ENCODE measurements at regions of chr11 and their contacts with region 1.

Region 1: DNA sequence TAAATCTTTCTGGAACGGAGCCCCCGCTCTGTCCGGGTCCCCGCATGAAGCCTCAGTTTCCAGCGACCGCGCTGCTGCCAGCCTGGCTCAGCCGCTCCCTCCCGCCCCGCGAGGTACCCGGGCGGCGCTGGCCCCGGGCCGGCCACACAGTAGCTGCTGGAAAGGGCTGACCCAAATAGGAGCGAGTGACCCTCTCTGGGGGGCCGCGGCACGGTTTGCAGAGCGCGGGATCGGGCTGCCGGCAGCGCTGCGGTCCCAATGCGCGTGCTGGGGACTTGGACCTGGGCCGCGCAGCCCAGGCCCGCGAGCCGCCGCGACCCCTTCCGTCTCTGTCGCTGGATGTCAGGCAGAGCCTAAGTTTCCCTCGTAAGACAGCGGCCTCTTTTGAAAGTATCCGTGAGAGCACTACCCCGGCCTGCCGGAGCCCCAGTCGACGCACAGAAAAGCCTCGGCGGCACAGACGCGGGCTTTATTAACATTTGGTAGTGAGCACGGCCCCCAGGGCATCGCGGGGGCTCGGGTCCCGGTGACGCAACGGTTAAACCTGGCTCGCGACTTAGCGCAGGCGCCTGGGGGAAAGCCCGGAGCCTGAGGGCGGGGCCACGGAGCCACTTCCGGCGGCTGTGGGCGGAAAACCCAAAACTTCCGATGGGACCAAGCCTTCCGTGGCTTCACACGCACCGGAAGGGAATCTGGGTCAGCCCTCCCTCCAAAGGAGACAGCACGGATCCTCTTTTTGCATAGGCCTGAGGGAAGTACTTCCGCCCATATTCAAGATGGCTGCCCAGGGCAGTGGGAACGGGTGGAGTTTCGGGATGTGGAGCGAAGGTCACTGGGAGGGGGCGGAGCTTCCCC is 14.9 kb downstream of the BAD start:
- DNase-seq: peak; percentile 94 to 99 (median 96)
- ATAC-seq: peak; percentile 68
- H3K4me3 ChIP-seq: peak overlapping the region; percentile 97
- H3K4me3 Mint-ChIP-seq: peak overlapping the region; percentile 94
- H3K27ac ChIP-seq: peak overlapping the region; percentile 92 to 99
- H3K27ac Mint-ChIP-seq: peak overlapping the region; percentile 99
- H3K4me1 ChIP-seq: peaks cover 43% of the 10 kb centered on the region
- H3K4me1 Mint-ChIP-seq: peaks cover 32% of the 10 kb centered on the region
- H3K27me3 ChIP-seq: no peaks in the 10 kb centered on the region
- H3K27me3 Mint-ChIP-seq: peaks cover 5% of the 10 kb centered on the region
- CTCF ChIP-seq: no peak

Region 2: DNA sequence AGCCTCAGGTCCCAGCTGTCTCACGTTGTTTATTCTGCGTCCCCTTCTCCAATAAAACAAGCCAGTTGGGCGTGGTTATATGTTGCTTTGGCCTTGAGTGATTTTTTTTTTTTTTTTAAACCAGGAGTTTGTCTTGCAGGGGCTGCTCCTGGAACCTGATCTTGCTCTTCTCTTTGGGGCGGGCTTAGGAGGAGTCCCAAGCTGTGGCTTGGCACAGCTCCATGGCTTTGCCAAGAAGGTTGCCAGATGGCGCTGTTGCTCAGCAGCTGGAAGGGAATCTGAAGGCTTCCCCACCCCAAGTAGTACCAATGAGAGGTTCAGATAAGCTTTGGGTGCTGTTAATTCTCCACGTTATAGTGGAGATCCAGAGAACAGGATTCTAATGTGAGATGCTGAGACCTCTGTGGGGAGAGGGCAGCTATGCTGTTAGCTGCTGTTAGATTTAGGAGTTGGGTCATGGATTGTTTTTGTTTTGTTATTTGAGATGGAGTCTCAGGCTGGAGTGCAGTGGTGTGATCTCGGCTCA is 65.1 kb before region 1 on chr11:
- CTCF ChIA-PET with region 1: interaction called, 19 read pairs
- POLR2A ChIA-PET with region 1: interaction called, 108 read pairs
- intact Hi-C with region 1: loop called (anchors 1 to 2 kb)
- DNase-seq: peak; percentile 77 to 95 (median 84)
- ATAC-seq: peak; percentile 63
- H3K4me3 ChIP-seq: no peak overlapping the region
- H3K4me3 Mint-ChIP-seq: peak overlapping the region; percentile 93
- H3K27ac ChIP-seq: no peak overlapping the region
- H3K27ac Mint-ChIP-seq: peak overlapping the region; percentile 78
- H3K4me1 ChIP-seq: peaks cover 50% of the 10 kb centered on the region
- H3K4me1 Mint-ChIP-seq: peaks cover 49% of the 10 kb centered on the region
- H3K27me3 ChIP-seq: no peaks in the 10 kb centered on the region
- H3K27me3 Mint-ChIP-seq: no peaks in the 10 kb centered on the region
- CTCF ChIP-seq: peak; percentile 69

Region 3: DNA sequence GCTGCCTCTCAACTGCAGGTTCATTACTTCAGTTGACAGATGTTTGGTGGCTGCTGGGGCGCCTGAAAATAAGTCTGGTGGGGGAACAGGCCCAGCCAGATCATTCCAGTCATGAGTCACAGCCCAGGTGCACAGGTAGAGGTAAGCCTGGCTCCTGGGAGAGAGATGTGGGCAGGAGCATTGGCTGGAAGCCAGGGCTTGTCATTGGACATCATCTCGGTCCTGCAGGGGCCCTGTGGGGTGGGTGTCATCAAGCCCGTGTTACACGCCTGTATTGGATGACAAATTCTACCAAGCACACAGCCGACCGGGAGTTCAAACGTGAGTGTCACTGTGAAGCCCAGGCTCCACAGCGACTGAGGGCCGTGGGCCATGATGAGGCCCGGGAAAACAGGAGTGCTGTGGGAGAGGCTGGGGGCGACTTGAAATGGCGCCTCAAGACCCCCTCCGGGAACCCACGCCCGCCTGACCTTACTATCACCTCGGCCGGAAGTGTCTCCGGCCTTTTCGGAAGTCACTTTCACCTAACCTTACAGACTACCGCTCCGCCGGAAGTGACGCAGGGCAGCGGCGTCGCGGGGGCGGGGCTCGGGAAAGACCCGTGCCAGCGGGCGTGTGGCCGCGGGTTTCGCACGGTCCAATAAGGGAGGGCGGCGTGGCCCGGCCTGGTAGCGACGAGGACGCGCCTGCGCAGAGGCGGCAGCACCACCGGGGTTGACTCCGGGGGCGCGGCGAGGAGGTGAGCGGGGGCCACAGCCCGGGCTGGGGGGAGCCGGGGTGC is 29.0 kb before region 1 on chr11 and contains the start of gene FKBP2:
- CTCF ChIA-PET with region 1: no interaction called
- POLR2A ChIA-PET with region 1: interaction called, 69 read pairs
- intact Hi-C with region 1: loop called in 1 of 2 experiments (anchors 1 kb)
- DNase-seq: peak; percentile 92 to 100 (median 97)
- ATAC-seq: peak; percentile 66
- H3K4me3 ChIP-seq: peak within 1 kb of the TSS; percentile 80
- H3K4me3 Mint-ChIP-seq: peak within 1 kb of the TSS; percentile 98
- H3K27ac ChIP-seq: peak within 1 kb of the TSS; percentile 97 to 100
- H3K27ac Mint-ChIP-seq: peak within 1 kb of the TSS; percentile 100
- H3K4me1 ChIP-seq: peaks cover 59% of the 10 kb centered on the region
- H3K4me1 Mint-ChIP-seq: peaks cover 40% of the 10 kb centered on the region
- H3K27me3 ChIP-seq: no peaks in the 10 kb centered on the region
- H3K27me3 Mint-ChIP-seq: no peaks in the 10 kb centered on the region
- CTCF ChIP-seq: no peak
- total RNA-seq, gene FKBP2: 11.2 to 14.6 TPM

Region 4: GRCh38 chr11:64252003-64252872 is 17.4 kb before region 1 on chr11:
- CTCF ChIA-PET with region 1: interaction called, 6 read pairs
- POLR2A ChIA-PET with region 1: interaction called, 51 read pairs
- intact Hi-C with region 1: loop called (anchors 1 kb)
- DNase-seq: peak in 2 of 14 experiments; percentile 40 to 49
- ATAC-seq: no peak
- H3K4me3 ChIP-seq: peak overlapping the region; percentile 78
- H3K4me3 Mint-ChIP-seq: peak overlapping the region; percentile 92
- H3K27ac ChIP-seq: no peak overlapping the region
- H3K27ac Mint-ChIP-seq: no peak overlapping the region
- H3K4me1 ChIP-seq: peaks cover 38% of the 10 kb centered on the region
- H3K4me1 Mint-ChIP-seq: peaks cover 20% of the 10 kb centered on the region
- H3K27me3 ChIP-seq: no peaks in the 10 kb centered on the region
- H3K27me3 Mint-ChIP-seq: no peaks in the 10 kb centered on the region
- CTCF ChIP-seq: no peak

Region 5: GRCh38 chr11:64341851-64342791 is 72.5 kb after region 1 on chr11:
- CTCF ChIA-PET with region 1: interaction called, 3 read pairs
- POLR2A ChIA-PET with region 1: interaction called, 16 read pairs
- intact Hi-C with region 1: no loop called
- DNase-seq: peak; percentile 78 to 94 (median 91)
- ATAC-seq: peak; percentile 68
- H3K4me3 ChIP-seq: peak overlapping the region; percentile 7
- H3K4me3 Mint-ChIP-seq: peak overlapping the region; percentile 34
- H3K27ac ChIP-seq: peak overlapping the region in 1 of 2 donors; percentile 50
- H3K27ac Mint-ChIP-seq: no peak overlapping the region
- H3K4me1 ChIP-seq: peaks cover 55% of the 10 kb centered on the region
- H3K4me1 Mint-ChIP-seq: peaks cover 54% of the 10 kb centered on the region
- H3K27me3 ChIP-seq: no peaks in the 10 kb centered on the region
- H3K27me3 Mint-ChIP-seq: no peaks in the 10 kb centered on the region
- CTCF ChIP-seq: no peak

Measured in CD4-positive, alpha-beta T cell (primary cell).